Activated CD4-positive, alpha-beta memory T cell treated with anti-CD3 and anti-CD28 coated beads, Interleukin-2, amount 10 ng/mL, durations not matched to agents 7 days and 5 days (primary cell): ENCODE measurements at regions of chr14 and their contacts with region 1.

Region 1: DNA sequence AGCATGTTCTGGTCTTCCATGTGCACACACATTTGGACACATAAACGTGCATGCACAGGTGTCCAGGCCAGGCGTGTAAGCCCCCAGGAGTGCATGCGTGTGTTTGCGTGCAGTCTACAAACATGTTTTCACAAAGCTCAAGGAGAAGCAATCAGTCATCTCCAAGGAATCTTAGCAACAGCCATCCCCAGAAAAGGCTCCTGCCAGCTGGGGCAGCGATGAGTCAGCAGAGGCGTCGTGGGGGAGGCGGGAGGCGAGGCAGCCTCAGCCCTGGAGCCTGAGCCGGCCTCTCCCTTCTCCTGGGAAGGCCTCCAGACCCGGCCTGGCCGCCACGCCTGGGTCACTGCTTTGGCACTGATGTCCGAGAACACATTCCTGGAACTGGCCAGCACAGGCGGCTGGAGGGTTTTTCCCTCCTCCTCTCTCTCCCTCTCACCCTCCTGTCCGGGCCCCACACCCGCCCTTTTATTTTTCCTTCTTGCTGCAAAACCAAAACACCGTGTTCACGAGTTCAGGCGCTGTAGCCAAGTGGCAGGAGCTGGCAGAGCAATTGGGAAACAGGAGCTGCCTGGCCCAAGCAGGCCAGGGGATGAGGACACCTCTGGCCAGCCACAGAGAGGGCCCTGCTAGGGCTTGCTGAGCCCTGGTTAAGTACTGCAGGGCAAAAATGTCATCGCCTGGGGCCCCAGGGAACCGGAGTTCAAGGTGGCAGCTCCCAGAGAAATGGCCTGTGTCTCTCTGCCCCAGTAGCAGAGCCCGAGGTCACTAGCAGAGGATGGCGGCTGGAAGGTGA is 92.7 kb downstream of the LRRC74A start:
- DNase-seq: no peak
- H3K4me3 Mint-ChIP-seq: no peak overlapping the region
- H3K27ac Mint-ChIP-seq: no peak overlapping the region
- H3K4me1 Mint-ChIP-seq: peaks cover 53% of the 10 kb centered on the region
- H3K27me3 Mint-ChIP-seq: peaks cover 5% of the 10 kb centered on the region

Region 2: GRCh38 chr14:76904740-76905438 is 14.1 kb before region 1 on chr14:
- CTCF ChIA-PET with region 1: interaction called, 13 read pairs
- POLR2A ChIA-PET with region 1: no interaction called
- DNase-seq: peak; percentile 64
- H3K4me3 Mint-ChIP-seq: no peak overlapping the region
- H3K27ac Mint-ChIP-seq: no peak overlapping the region
- H3K4me1 Mint-ChIP-seq: peaks cover 34% of the 10 kb centered on the region
- H3K27me3 Mint-ChIP-seq: peaks cover 4% of the 10 kb centered on the region

Region 3: GRCh38 chr14:76956316-76957090 is 37.6 kb after region 1 on chr14:
- CTCF ChIA-PET with region 1: interaction called, 35 read pairs
- POLR2A ChIA-PET with region 1: interaction called, 11 read pairs
- DNase-seq: peak; percentile 94
- H3K4me3 Mint-ChIP-seq: peak overlapping the region; percentile 73
- H3K27ac Mint-ChIP-seq: peak overlapping the region; percentile 96
- H3K4me1 Mint-ChIP-seq: peaks cover 79% of the 10 kb centered on the region
- H3K27me3 Mint-ChIP-seq: peaks cover 4% of the 10 kb centered on the region

Region 4: DNA sequence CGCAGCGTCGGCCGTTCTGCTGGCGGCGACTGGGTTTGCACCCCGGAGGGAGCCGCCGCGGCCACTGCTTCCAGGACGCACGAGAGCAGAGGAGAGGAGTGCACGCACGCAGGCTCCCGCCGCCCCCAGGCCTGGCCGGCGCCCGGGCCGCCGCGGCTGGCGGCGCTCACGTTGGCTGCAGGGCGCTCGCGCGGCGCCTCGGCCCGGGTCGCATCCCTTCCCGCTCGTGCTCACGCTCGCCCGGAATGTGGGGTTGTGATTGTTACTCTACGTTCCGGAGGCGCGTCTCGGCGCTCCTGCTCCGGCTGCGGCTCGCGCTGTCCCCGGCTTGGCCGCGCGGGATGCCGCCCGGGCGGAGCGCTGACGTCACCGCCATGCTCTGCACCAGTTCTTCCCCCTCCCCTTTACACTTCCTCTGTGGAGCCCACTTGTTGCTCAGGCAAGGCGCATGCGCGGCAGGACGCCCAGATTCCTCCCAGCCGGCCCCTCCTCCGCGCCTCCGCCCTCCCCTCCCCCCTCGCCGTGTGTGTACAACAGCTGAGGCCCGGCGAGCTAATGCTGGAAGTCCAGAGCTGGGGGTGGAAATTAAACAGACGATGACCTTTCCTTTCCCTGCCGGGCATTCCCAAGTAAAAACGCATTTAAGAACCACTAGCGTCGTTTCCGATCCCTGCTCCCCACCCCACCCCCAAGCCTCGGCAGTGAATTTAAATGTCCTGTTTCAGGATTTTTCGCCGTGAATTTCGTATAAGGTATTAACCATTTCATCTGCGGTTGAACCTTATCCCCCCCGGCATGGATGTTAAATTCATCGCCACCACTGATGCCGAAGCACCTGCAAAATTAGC is 109.7 kb after region 1 on chr14 and contains the start of gene IRF2BPL:
- CTCF ChIA-PET with region 1: interaction called, 11 read pairs
- POLR2A ChIA-PET with region 1: interaction called, 12 read pairs
- DNase-seq: peak; percentile 95
- H3K4me3 Mint-ChIP-seq: peak within 1 kb of the TSS; percentile 88
- H3K27ac Mint-ChIP-seq: peak within 1 kb of the TSS; percentile 89
- H3K4me1 Mint-ChIP-seq: peaks cover 58% of the 10 kb centered on the region
- H3K27me3 Mint-ChIP-seq: no peaks in the 10 kb centered on the region
- total RNA-seq, gene IRF2BPL: 39.0 to 39.3 TPM

Region 5: GRCh38 chr14:77040059-77040740 is 121.3 kb after region 1 on chr14:
- CTCF ChIA-PET with region 1: interaction called, 29 read pairs
- POLR2A ChIA-PET with region 1: interaction called, 6 read pairs
- DNase-seq: peak; percentile 92
- H3K4me3 Mint-ChIP-seq: peak overlapping the region; percentile 63
- H3K27ac Mint-ChIP-seq: peak overlapping the region; percentile 100
- H3K4me1 Mint-ChIP-seq: peaks cover 87% of the 10 kb centered on the region
- H3K27me3 Mint-ChIP-seq: no peaks in the 10 kb centered on the region